Motor neuron (in vitro differentiated cells): ENCODE measurements at regions of chr9 and their contacts with region 1.

Region 1: GRCh38 chr9:79829566-79830302 is 258.0 kb downstream of the TLE4 start:
- ATAC-seq: peak in 1 of 8 experiments; percentile 34
- H3K4me3 ChIP-seq: no peak overlapping the region
- H3K27ac ChIP-seq: no peak overlapping the region
- H3K4me1 ChIP-seq: peaks cover 0 to 6% of the 10 kb centered on the region in 2 donors

Region 2: GRCh38 chr9:79946712-79947111 is 117.0 kb after region 1 on chr9:
- in situ Hi-C with region 1: loop called in 1 of 9 experiments (anchors 25 kb)
- ATAC-seq: peak in 1 of 8 experiments; percentile 35
- H3K4me3 ChIP-seq: no peak overlapping the region
- H3K27ac ChIP-seq: no peak overlapping the region
- H3K4me1 ChIP-seq: no peaks in the 10 kb centered on the region

Region 3: DNA sequence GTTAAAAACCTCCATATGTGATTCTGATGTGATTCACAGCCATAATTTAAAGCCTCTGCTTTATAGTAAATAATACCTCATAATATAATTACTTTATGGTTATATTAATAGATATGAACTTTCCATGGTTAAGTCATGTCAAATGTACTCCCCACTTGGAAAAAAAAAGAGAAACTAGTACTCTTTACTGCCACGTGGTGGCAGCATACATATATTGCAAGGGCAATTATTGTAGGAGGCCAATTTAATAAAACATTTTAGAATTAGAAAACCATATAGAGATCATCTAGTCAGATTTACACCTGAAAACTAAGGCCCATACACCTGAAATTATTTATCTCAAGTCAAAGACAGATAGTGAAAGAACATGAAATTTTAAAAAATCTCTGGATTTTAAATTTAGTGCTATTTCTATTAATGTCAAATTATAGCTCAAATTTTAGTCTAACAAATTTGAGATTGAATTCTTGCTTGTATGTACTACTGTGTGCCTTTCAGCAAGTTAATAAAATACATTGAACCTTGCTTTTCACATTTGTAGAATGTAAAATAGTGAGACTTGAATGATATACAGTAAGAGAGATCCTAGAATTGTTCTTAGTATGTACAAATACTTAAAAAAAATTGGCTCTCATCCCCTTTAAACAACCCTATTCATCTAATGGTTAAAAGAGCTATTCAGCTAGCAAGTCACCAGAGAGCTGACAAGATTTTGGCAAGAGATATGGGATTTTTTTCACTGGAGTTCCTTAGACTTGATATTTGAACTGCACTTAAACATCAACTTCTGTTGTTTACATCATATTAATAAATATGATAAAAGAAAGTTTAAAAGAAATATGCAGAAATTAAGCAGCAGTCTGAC is 345.8 kb after region 1 on chr9:
- in situ Hi-C with region 1: no loop called
- ATAC-seq: no peak
- H3K4me3 ChIP-seq: no peak overlapping the region
- H3K27ac ChIP-seq: no peak overlapping the region
- H3K4me1 ChIP-seq: no peaks in the 10 kb centered on the region